ENCODE measurements at regions of chr5 and their contacts with region 1.

Region 1: GRCh38 chr5:39148983-39149534 is 70.3 kb downstream of the FYB1 start:
- DNase-seq: peak; percentile 10
- ATAC-seq: peak; percentile 54
- H3K4me3 ChIP-seq: no peak overlapping the region
- H3K27ac ChIP-seq: no peak overlapping the region
- H3K4me1 ChIP-seq: no peaks in the 10 kb centered on the region
- H3K27me3 ChIP-seq: no peaks in the 10 kb centered on the region
- CTCF ChIP-seq: peak; percentile 14 to 50 (median 43); a peak in 4 of 6 replicates
- POLR2A ChIP-seq: no peak
- RAD21 ChIP-seq: peak; percentile 60

Region 2: DNA sequence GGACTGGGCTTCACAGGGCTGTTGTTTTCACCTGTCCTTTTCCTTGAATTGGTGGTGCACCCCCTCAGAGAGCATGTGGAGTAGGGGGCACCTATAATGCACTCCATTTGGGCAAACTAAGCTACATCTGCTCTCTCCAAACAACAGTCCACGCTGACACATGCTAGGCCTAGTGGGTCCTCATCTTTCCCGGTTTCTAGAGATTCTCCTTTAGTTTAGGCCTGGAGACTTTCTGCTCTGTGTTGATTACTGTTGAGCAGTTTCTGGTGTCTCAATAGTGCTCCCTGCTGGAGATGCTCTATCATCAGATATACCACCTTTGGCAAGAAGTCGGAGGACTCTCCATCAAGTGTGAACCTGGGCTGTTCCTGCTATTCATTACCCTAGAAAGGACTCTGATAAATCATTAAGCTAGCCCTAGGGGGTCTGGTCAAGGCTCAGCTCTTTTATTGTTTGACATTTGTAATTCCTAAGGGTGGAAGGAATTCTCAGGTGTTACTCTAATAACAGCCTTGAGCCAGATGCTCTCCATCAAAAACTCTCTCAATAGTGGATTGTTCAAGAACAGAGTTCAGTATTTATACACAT is 134.3 kb after region 1 on chr5:
- CTCF ChIA-PET with region 1: no interaction called
- POLR2A ChIA-PET with region 1: no interaction called
- RAD21 ChIA-PET with region 1: no interaction called
- intact Hi-C with region 1: loop called (anchors 1 kb)
- DNase-seq: peak; percentile 12
- ATAC-seq: peak; percentile 81
- H3K4me3 ChIP-seq: no peak overlapping the region
- H3K27ac ChIP-seq: no peak overlapping the region
- H3K4me1 ChIP-seq: no peaks in the 10 kb centered on the region
- H3K27me3 ChIP-seq: no peaks in the 10 kb centered on the region
- CTCF ChIP-seq: peak; percentile 38 to 56 (median 43); a peak in 5 of 6 replicates
- POLR2A ChIP-seq: no peak
- RAD21 ChIP-seq: peak; percentile 61

Region 3: DNA sequence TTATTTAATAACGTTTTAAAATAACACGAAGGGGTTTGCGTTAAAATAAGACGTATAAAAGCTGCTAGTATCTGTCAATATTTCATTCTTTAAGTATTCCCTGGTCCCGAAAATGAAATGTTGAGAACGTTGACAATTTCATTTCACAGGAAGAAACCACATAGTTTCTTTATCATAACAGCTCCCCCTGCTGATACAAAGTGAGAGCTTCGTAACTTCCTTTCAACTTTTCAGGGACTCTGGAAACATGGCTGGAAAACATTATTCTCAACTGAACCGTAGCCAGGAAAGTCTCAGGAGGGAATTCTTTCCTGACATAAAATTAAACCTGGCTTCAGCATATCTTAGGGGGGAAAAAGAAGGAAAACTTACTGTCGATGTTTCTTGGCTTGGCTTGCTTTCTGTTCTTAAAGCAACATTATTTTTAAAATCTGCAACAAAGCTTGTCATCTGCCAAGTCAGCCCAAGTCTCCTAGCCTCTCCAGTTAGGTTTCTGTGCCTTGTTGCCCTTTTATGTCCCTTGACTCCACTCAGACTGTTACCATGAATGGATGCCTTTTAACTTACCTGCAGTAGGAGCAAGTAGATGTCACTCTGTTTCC is 398.6 kb after region 1 on chr5:
- CTCF ChIA-PET with region 1: no interaction called
- POLR2A ChIA-PET with region 1: no interaction called
- RAD21 ChIA-PET with region 1: no interaction called
- intact Hi-C with region 1: loop called (anchors 5 kb)
- DNase-seq: peak; percentile 43
- ATAC-seq: peak; percentile 73
- H3K4me3 ChIP-seq: no peak overlapping the region
- H3K27ac ChIP-seq: no peak overlapping the region
- H3K4me1 ChIP-seq: 0 out of 4 replicates have a peak, but pooled peaks cover 0 to 4% of the 10 kb centered on the region in 2 experiments
- H3K27me3 ChIP-seq: no peaks in the 10 kb centered on the region
- CTCF ChIP-seq: peak; percentile 72 to 75 (median 75); a peak in 5 of 6 replicates
- POLR2A ChIP-seq: no peak
- RAD21 ChIP-seq: peak; percentile 79

Region 4: DNA sequence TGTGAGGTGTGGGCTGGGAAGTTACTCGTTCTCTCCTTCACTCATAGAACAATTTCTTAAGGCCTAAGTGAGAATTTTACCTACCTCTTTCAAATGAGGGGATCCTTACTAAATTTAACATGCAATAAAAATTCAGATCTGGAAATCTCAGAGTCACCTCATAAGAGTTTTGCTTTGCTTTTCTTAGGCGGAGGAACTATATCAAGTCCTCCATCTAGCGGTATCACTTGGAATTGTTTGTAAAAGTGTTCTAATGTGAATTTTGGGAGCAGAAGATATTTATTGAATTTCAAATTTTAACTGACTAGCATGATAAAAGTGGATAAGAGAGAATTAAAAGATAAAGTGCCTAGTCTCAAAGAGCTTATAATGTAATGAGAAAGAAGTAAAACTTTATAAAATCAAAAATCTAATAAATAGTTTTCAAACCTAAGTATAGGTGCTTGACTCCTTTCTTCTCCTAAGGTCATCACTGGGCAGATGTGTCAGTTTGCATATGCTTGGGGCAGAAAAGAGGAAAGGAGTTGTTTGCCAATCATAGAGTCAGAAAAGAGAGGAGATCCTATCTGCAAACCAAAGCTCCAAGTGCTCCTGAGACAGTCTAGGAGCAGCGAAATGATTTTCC is 421.5 kb after region 1 on chr5:
- CTCF ChIA-PET with region 1: no interaction called
- POLR2A ChIA-PET with region 1: no interaction called
- RAD21 ChIA-PET with region 1: no interaction called
- intact Hi-C with region 1: loop called (anchors 1 kb)
- DNase-seq: peak; percentile 31
- ATAC-seq: peak; percentile 67
- H3K4me3 ChIP-seq: no peak overlapping the region
- H3K27ac ChIP-seq: no peak overlapping the region
- H3K4me1 ChIP-seq: no peaks in the 10 kb centered on the region
- H3K27me3 ChIP-seq: no peaks in the 10 kb centered on the region; the same call in 1 of the 2 replicates
- CTCF ChIP-seq: peak; percentile 52 to 77 (median 57); a peak in 5 of 6 replicates
- POLR2A ChIP-seq: no peak
- RAD21 ChIP-seq: peak; percentile 67

Measured in HCT116 (cell line).